GM10248 (cell line): ENCODE measurements at regions of chr20 and their contacts with region 1.

Region 1: DNA sequence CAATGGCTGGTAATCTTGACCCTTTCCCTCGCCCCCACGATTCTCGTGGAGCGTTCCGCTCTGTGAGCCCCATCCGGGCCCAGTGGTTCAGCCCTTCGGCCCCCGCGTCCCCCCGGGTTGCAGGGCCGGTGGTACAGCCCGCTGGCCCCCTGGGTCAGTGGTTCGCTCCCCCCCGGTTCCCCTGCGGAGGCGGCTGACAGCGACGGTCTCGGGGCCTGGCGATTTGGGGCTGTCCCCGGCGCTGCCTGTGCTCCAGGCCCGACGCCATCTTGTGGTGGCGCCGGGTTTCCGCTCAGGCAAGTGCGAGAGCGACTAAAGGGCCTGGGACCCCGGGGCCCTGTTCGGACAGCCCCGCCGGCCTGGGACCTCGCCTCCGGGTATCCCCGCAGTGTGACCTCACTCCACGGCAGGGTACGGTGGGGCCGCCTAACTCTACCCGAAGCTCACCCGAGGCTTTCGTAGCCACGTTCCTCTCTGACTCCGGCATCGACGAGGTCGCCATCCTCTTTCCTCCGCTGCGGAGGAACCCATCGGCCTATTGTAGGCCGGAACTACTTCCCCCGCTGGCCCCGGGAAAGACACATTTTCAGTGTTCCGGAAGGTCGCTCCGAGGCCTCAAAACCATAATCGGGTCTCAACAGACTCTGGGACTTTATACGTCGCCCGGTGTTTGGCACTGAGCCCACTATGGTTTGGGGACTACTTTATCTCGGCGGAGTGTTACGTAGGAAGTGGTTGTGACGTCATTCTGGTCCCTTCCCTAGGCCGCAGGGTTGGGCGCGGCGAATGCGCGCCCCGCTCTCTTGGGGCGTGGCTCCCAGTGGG is at the start of gene ZNF335:
- DNase-seq: peak; percentile 99
- CTCF ChIP-seq: no peak

Region 2: DNA sequence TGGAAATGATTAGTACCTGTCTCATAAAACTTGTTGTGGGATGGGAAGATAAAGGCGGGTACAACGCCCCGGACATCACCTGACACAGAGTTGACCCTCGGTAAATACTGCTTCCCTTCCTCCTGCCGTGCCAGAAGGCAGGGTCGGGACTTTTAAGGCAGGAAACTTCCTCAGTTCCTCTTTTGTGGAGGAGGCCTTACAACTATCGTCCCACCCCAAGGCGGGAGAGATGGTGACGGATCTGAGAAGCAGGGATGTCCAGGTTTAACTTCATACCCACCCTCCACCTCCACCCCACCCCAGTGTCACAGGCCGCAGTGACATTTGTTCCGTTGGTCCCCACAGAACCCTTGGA is 179.6 kb before region 1 on chr20:
- CTCF ChIA-PET with region 1: no interaction called
- POLR2A ChIA-PET with region 1: no interaction called
- DNase-seq: no peak
- CTCF ChIP-seq: no peak

Region 3: GRCh38 chr20:45890985-45891983 is 80.6 kb before region 1 on chr20 and contains the starts of genes CTSA and NEURL2:
- CTCF ChIA-PET with region 1: interaction called, 14 read pairs
- POLR2A ChIA-PET with region 1: no interaction called
- DNase-seq: peak; percentile 98
- CTCF ChIP-seq: no peak

Region 4: GRCh38 chr20:45934586-45935415 is 37.1 kb before region 1 on chr20 and contains the start of gene PCIF1:
- CTCF ChIA-PET with region 1: interaction called, 43 read pairs
- POLR2A ChIA-PET with region 1: interaction called, 14 read pairs
- DNase-seq: peak; percentile 99
- CTCF ChIP-seq: no peak

Region 5: GRCh38 chr20:45953672-45954071 is 18.2 kb before region 1 on chr20:
- CTCF ChIA-PET with region 1: interaction called, 92 read pairs
- POLR2A ChIA-PET with region 1: interaction called, 9 read pairs
- DNase-seq: no peak
- CTCF ChIP-seq: no peak

Region 6: GRCh38 chr20:46013826-46014516 is 42.1 kb after region 1 on chr20:
- CTCF ChIA-PET with region 1: interaction called, 27 read pairs
- POLR2A ChIA-PET with region 1: no interaction called
- DNase-seq: peak; percentile 85
- CTCF ChIP-seq: peak; percentile 82